Cardiac septum (tissue), 1 donor: ENCODE measurements at regions of chr7 and their contacts with region 1.

Region 1: GRCh38 chr7:25851332-25852210 is 300.4 kb upstream of the NFE2L3 start:
- DNase-seq: peak; percentile 89

Region 2: GRCh38 chr7:25389489-25390106 is 462.0 kb before region 1 on chr7:
- intact Hi-C with region 1: loop called (anchors 2 kb)
- DNase-seq: no peak

Region 3: GRCh38 chr7:25565949-25566348 is 285.6 kb before region 1 on chr7:
- intact Hi-C with region 1: loop called (anchors 2 kb)
- DNase-seq: no peak

Region 4: GRCh38 chr7:25663877-25664276 is 187.7 kb before region 1 on chr7:
- intact Hi-C with region 1: loop called (anchors 5 kb)
- DNase-seq: no peak

Region 5: DNA sequence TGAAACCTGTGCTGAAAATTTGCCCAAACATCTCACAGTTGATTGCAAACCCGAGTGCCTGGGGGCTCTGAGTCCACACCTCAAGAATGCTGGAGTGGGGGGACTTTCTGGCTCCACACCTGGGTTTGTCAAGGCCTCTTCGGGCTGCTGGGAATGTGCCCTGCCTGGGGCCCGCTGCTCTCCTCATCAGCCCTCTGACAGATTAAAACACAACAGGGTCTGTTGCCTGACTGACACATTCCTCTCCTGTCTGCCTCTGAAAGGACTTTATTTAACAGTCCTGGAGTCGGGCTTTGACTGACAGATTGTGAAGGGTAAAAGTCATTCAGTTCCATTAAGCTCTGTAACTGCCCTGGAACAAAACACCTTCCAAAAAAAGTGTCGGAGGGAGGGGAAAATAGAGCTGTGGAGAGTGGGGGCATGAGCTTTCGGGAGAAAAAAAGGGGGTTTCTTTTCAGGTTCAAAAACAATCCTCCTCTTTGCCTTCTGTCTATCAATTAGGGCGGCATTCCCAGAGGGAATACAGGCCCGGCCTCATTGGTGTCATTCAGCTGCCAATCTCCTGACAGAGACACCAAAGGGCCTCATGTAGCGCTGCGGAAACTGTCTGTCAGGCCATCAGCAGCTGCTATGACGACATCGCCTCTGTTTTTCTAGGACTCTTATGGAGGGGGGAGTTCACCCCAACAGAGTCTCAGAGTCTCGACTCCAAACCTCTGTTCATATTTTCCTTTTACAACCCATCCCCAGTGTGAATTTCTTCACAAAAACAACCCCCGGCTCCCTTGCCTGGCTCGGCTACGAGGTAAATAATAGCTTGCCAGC is 98.4 kb before region 1 on chr7:
- intact Hi-C with region 1: loop called (anchors 1 kb)
- DNase-seq: no peak